ENCODE measurements at regions of chr12 and their contacts with region 1.

Region 1: DNA sequence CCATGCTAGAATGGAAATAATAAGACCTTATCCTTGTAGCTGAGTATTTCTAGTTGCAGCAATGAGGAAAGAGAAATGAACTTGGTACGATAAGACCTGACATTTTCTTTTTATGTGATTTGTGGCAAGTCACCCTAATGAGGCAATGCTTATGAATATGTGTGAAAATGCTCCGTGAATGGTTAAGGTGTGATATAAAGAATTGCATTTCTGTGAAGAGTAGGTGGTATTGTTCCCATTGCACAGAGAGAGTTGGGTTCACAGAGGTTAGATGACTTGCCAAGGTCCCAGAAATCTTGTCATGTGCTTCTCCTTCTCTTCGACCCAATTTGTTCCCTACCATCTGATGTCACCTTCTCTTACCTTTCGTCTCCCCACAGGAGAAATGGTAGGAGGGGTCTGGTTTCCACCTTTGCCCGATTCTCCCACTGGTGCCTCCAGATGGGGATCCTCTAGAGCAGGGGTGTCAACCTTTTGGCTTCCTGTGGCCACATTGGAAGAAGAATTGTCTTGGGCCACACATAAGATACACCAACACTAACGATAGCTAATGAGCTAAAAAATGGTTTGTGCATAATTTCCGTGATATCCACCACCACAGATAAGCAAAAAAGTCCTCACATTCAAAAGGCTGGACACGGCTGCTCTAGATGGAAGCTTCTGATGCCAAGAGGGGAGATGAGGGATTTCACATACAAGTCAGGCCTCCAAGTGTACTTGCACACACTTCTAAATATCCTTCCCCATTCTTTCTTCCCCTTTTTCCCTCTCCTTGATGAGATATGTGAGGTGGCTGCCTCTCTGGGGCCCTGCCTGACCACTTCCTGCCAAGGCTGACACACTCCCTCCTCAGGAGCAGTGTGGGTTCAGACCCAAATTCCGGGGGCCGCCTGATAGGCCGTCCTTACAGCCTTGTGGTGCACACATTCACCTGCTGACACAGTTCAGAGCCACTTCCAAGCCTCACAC is 96.1 kb downstream of the PLXNC1 start:
- DNase-seq: peak in 1 of 2 donors; percentile 16
- ATAC-seq: no peak
- H3K4me3 ChIP-seq: no peak overlapping the region
- H3K27ac ChIP-seq: no peak overlapping the region
- H3K4me1 ChIP-seq: peaks cover 0 to 9% of the 10 kb centered on the region in 2 donors
- H3K27me3 ChIP-seq: no peaks in the 10 kb centered on the region
- CTCF ChIP-seq: no peak
- POLR2A ChIP-seq: no peak

Region 2: DNA sequence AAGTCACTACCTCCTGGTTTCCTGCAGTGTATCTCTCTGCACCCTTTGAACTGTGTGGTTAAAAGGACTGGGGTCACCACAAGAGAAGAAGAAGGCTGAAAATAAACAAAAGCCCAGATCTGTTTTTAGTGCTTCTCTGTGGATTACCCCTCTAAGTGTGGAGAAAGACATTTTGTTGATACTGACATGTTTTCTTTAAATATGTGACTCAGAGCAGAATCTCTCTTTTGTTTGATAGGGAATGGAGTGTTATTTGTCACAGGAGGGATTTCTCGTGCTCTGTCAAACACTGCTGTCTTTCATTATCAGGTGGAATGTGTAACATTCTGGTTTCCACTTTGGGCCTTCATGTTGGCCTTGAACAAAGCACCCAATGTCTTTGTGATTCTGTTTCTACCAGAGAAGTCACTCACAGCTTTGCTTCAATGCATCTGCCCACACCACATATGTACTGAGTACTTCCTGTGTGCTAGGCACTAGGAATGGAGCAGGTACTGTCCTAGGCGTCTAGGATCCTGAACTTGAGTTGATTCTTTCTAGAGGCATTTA is 14.0 kb before region 1 on chr12:
- in situ Hi-C with region 1: no loop called
- intact Hi-C with region 1: no loop called
- DNase-seq: no peak
- ATAC-seq: no peak
- H3K4me3 ChIP-seq: no peak overlapping the region
- H3K27ac ChIP-seq: no peak overlapping the region
- H3K4me1 ChIP-seq: no peaks in the 10 kb centered on the region
- H3K27me3 ChIP-seq: no peaks in the 10 kb centered on the region
- CTCF ChIP-seq: no peak
- POLR2A ChIP-seq: no peak

Region 3: GRCh38 chr12:94326727-94327126 is 82.3 kb after region 1 on chr12:
- in situ Hi-C with region 1: loop called in 1 of 4 experiments (anchors 25 kb)
- intact Hi-C with region 1: no loop called
- DNase-seq: no peak
- ATAC-seq: no peak
- H3K4me3 ChIP-seq: no peak overlapping the region
- H3K27ac ChIP-seq: no peak overlapping the region
- H3K4me1 ChIP-seq: no peaks in the 10 kb centered on the region
- H3K27me3 ChIP-seq: no peaks in the 10 kb centered on the region
- CTCF ChIP-seq: no peak
- POLR2A ChIP-seq: no peak